ENCODE measurements at regions of chr20 and their contacts with region 1.

Region 1: DNA sequence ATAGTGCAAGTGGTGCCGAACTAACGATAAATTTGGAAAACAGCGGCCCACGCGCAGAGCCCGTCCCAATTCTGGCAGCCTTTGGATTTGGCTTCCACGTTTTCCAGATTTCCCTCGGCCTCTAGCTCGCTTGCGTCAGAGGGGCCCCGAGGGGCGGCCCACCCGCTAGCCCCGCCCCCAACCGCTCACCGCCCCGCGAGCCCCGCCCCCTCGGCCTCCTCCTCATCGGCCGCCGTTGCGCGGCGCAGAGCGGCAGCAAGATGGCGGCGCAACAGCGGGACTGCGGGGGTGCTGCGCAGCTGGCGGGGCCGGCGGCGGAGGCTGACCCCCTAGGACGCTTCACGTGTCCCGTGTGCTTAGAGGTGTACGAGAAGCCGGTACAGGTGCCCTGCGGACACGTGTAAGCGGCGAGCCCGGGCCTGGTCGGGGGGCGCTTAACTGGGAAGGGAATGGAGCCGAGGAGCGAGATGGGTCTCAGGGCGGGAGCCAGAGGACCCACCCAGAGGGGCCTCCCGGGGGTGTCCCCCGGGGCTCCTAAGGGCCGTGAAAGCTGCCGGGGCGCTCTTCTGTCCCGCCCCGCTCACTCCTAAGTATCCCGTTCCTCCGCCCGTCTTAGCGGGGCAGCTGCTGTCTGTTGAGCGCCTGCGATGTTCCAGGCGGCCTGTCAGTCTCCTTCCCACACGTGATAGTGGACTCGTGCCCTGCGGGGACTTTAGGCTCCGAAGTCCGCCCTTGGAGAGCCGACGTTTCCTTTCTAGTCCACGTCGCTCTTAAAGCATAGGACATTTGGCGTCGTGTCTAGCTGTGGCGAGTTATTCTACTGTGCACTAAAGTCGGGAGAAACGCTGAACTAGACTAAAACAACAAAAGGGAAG is at the start of gene RNF114:
- DNase-seq: peak; percentile 87 to 89 (median 87)
- H3K4me3 ChIP-seq: peak within 1 kb of the TSS; percentile 82 to 93 (median 93)
- H3K4me3 Mint-ChIP-seq: peak within 1 kb of the TSS; percentile 94 to 98
- H3K27ac ChIP-seq: peak within 1 kb of the TSS; percentile 90 to 97
- H3K27ac Mint-ChIP-seq: peak within 1 kb of the TSS; percentile 95 to 98 (median 97)
- H3K4me1 ChIP-seq: peaks cover 45 to 51% of the 10 kb centered on the region in 2 donors
- H3K4me1 Mint-ChIP-seq: peaks cover 51% of the 10 kb centered on the region
- H3K27me3 ChIP-seq: no peaks in the 10 kb centered on the region
- H3K27me3 Mint-ChIP-seq: no peaks in the 10 kb centered on the region
- CTCF ChIP-seq: no peak
- polyA plus RNA-seq, gene RNF114: 128 to 164 (median 146) TPM

Region 2: DNA sequence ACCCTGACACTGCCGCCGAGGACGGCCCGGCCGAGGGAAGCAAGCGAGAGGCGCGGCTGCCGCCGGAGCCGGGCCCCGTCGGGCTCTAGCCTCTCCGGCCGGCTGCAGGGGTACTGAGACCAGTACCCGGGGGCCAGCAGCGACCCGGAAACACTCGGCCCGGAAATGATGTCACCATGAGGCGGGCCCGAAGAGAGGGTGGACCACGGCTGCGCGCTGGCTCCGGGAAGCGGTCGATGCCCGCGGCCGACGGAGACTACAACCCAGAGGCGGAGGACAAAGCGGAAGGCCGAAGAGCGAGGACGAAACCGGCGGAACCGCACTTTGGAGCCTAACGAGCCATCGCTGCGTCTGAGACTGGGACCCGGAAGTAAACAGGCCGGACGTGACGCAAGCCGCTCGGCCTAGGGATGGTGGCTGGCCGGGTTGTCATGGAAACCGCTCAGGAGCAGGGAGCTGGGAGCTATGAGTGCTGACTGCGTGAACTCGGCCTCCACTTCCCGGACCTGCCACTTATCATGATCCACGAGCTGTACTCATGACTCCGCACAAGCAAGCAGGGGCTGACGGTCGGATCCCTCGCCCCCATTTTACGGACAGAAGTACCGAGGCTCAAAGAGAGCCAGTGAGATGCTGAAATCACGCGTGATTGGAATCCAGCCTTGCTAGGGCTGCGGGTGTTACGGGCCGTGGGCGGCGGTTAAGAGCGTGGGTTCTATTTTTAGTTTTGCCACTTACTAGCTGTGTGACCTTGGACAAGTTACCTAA is 20.8 kb before region 1 on chr20 and contains the start of gene SPATA2:
- intact Hi-C with region 1: loop called in 1 of 2 experiments (anchors 2 kb)
- DNase-seq: peak; percentile 95 to 98 (median 96)
- H3K4me3 ChIP-seq: peak within 1 kb of the TSS; percentile 73 to 96 (median 85)
- H3K4me3 Mint-ChIP-seq: peak within 1 kb of the TSS; percentile 89 to 96
- H3K27ac ChIP-seq: peak within 1 kb of the TSS; percentile 96 to 98
- H3K27ac Mint-ChIP-seq: peak within 1 kb of the TSS; percentile 100
- H3K4me1 ChIP-seq: peaks cover 34 to 35% of the 10 kb centered on the region in 2 donors
- H3K4me1 Mint-ChIP-seq: peaks cover 36% of the 10 kb centered on the region
- H3K27me3 ChIP-seq: no peaks in the 10 kb centered on the region
- H3K27me3 Mint-ChIP-seq: peaks cover 0 to 1% (median 0%) of the 10 kb centered on the region in 3 donors
- CTCF ChIP-seq: no peak
- polyA plus RNA-seq, gene SPATA2: 1.9 to 13.3 (median 3.9) TPM